ENCODE measurements at regions of chr5 and their contacts with region 1.

Region 1: GRCh38 chr5:132963175-132964104 is at the start of gene AFF4:
- DNase-seq: peak; percentile 96 to 97
- ATAC-seq: peak; percentile 96 to 98 (median 97)
- H3K4me3 ChIP-seq: peak within 1 kb of the TSS; percentile 62 to 99 (median 94)
- H3K27ac ChIP-seq: peak within 1 kb of the TSS; percentile 94 to 99 (median 99)
- H3K4me1 ChIP-seq: peaks cover 5 to 45% (median 37%) of the 10 kb centered on the region in 9 donors
- H3K27me3 ChIP-seq: no peaks in the 10 kb centered on the region
- CTCF ChIP-seq: no peak
- total RNA-seq, gene AFF4: 35.2 to 63.8 (median 53.3) TPM

Region 2: GRCh38 chr5:133025804-133026663 is 62.6 kb after region 1 on chr5 and contains the start of gene ZCCHC10:
- intact Hi-C with region 1: loop called in 3 of 10 experiments (anchors 10 kb)
- DNase-seq: peak; percentile 92 to 94
- ATAC-seq: peak; percentile 98 to 100 (median 100)
- H3K4me3 ChIP-seq: peak within 1 kb of the TSS; percentile 59 to 99 (median 90)
- H3K27ac ChIP-seq: peak within 1 kb of the TSS; percentile 75 to 99 (median 94)
- H3K4me1 ChIP-seq: peaks cover 3 to 26% (median 20%) of the 10 kb centered on the region in 9 donors
- H3K27me3 ChIP-seq: no peaks in the 10 kb centered on the region
- CTCF ChIP-seq: no peak
- total RNA-seq, gene ZCCHC10: 12.2 to 22.4 (median 19.4) TPM

Region 3: DNA sequence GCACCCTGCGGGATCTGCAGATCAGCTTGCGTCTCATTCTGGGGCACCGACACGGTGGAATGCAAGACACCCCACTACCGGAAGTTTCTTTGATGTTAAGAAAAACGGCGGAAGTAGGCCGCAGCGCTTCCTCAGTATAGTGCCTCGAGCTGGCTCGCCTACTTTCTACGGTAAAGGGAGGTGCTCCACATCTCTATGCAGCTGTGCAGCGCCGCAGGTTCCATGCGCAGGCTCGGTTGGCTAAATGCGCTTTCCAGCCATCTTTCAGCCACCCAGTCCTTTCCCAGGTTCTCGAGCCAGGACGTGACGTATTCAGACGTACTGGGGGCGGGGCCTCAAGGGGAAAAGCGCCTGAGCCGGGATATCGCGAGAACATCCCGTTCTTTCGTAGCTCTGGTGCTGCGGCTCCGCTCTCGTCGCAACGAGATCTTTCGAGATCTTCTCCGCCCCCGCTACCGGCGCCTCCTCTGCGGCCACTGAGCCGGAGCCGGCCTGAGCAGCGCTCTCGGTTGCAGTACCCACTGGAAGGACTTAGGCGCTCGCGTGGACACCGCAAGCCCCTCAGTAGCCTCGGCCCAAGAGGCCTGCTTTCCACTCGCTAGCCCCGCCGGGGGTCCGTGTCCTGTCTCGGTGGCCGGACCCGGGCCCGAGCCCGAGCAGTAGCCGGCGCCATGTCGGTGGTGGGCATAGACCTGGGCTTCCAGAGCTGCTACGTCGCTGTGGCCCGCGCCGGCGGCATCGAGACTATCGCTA is 88.3 kb after region 1 on chr5 and contains the start of gene HSPA4:
- intact Hi-C with region 1: loop called in 6 of 10 experiments (anchors 2 to 10 kb)
- DNase-seq: peak; percentile 95 to 99
- ATAC-seq: peak; percentile 89 to 97 (median 94)
- H3K4me3 ChIP-seq: peak within 1 kb of the TSS; percentile 70 to 98 (median 90)
- H3K27ac ChIP-seq: peak within 1 kb of the TSS; percentile 86 to 99 (median 98)
- H3K4me1 ChIP-seq: peaks cover 6 to 65% (median 54%) of the 10 kb centered on the region in 9 donors
- H3K27me3 ChIP-seq: no peaks in the 10 kb centered on the region
- CTCF ChIP-seq: no peak
- total RNA-seq, gene HSPA4: 79.6 to 156 (median 111) TPM